ENCODE measurements at regions of chr9 and their contacts with region 1.

Region 1: GRCh38 chr9:115591584-115591984 is 473.6 kb upstream of the TNC start:
- DNase-seq: peak; percentile 96
- H3K27ac ChIP-seq: peak overlapping the region; percentile 50; the same call in 1 of the 2 replicates
- CTCF ChIP-seq: peak; percentile 99

Region 2: DNA sequence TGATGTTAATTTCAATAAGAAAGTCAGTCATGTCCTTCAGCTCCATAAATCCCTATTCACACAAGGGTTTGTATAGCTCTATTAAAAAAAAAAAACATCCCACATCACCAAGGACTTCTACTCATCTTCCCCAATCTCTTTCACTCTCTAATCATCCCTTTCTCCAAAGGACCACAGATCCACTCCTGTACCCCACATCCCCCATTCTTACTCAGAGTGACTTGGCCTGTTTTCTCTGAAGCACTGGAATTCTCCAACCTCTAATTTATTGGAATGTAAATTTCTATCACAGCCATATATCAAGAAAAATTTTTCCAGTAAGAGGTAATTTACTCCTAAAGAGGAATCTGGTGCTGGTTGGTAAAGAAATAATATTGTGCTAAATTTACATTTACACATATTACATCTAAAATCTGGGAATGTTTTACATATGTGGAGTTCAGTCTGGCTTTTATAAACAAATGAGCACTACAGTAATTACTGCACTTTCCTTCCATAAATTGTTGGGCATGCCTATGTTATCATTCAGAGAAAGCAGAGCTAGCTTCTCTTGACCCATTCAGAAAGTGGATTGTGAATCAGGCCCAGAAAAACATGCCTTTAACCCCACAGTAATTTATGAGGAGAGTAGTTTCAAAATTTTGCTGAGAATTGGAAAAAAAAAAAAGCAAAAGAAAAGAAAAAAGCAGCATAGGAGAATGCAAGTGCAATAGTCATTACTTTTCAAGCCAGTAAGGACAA is 74.1 kb before region 1 on chr9:
- CTCF ChIA-PET with region 1: no interaction called
- POLR2A ChIA-PET with region 1: no interaction called
- DNase-seq: no peak
- H3K27ac ChIP-seq: no peak overlapping the region
- CTCF ChIP-seq: no peak

Region 3: GRCh38 chr9:115604831-115605483 is 13.4 kb after region 1 on chr9:
- CTCF ChIA-PET with region 1: interaction called, 17 read pairs
- POLR2A ChIA-PET with region 1: no interaction called
- DNase-seq: peak; percentile 70
- H3K27ac ChIP-seq: no peak overlapping the region
- CTCF ChIP-seq: no peak

Region 4: DNA sequence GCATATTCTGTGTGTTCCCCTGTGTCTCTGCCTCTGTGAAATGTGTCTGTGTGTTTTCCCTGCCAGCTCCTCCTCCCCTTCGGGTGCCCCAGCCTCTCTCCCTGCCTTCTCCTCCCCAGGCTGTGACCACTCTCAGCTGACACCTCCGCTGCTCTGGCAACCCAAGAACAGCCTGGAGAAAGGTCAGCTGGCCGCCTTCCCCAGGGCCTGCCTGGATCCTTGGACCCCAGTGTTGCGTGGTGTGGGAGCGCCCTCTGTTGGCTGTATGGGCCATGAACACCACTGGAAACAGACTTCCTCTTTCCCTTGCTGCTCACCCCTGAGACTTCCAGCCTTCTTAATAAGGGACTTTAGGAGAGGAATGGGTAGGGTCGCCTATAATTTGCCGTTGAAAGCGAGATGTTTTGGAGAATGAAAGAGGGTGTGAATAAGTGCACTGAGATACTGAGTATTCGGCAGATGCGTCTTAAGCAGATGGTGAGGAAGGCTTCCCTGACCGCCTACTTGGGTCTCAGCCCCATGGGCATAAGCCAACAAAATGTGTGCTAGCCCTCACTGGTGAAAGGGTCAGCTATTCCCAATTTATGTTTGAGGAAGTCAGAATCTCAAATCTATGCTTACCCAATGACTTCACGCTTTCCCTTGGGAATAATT is 980.6 kb after region 1 on chr9:
- CTCF ChIA-PET with region 1: interaction called, 26 read pairs
- POLR2A ChIA-PET with region 1: no interaction called
- DNase-seq: peak; percentile 91
- H3K27ac ChIP-seq: no peak overlapping the region
- CTCF ChIP-seq: peak; percentile 95

Region 5: DNA sequence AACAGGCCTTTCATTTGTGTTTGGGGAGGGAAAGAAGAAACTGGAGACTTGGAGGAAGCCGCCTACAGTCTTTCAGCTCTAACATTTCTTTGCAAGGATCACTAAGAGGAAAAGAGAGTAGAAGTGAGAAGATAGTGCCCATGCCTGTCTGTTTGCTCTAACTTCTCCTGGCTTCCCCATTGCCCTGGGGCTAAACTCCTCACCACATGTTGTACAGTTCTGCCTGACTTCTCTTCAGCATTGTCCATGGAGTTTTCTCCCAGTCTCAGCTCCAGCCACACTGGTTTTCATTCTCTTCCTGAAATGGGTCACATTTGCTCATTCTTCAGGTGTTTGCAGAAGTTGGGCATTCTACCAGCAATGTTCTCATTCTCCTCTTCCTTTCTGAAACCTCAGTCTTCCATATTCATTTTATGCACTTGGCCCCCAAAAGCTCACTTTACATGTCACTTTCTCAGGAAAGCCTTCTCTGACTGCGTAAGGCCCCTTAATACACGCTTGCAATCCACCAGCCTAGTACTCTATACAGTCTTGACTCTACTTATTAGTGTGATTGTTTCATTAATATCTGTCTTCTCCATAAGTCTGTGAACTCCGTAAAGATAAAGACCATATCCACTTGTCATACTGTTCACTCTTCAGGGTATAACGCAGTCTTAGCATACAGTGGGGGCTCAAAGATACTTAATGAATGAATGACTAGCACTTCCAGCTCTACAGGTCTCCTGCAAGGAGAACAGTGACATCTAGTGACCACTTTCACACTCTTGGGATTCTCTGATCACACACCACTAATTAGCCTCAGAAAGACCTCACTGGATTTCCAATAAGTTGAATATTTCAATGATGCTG is 1055.3 kb after region 1 on chr9:
- CTCF ChIA-PET with region 1: interaction called, 31 read pairs
- POLR2A ChIA-PET with region 1: no interaction called
- DNase-seq: peak; percentile 34
- H3K27ac ChIP-seq: no peak overlapping the region
- CTCF ChIP-seq: peak; percentile 75

Region 6: DNA sequence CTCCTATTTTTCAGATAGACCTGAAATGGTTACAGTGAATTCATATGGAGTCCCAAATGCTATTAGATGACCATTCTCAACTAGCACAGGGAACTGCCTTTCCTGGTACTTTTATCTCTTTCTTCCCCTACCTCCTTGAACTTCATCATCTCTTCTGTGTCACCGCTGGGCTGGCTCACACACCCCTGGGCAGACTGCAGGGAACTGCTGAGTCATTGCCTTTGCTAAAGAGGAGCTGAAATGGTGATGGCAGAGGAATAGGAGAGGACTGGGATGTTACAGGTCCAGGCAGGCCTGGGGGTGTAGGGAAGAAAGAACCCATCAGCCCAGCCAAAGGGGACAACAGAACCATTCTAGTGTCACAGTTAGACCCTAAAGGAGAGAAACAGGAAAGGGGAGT is 1501.0 kb after region 1 on chr9:
- CTCF ChIA-PET with region 1: no interaction called
- POLR2A ChIA-PET with region 1: no interaction called
- DNase-seq: peak; percentile 20
- H3K27ac ChIP-seq: no peak overlapping the region
- CTCF ChIP-seq: no peak